Adrenal gland (tissue), 19 donors: ENCODE measurements at regions of chr2 and their contacts with region 1.

Region 1: DNA sequence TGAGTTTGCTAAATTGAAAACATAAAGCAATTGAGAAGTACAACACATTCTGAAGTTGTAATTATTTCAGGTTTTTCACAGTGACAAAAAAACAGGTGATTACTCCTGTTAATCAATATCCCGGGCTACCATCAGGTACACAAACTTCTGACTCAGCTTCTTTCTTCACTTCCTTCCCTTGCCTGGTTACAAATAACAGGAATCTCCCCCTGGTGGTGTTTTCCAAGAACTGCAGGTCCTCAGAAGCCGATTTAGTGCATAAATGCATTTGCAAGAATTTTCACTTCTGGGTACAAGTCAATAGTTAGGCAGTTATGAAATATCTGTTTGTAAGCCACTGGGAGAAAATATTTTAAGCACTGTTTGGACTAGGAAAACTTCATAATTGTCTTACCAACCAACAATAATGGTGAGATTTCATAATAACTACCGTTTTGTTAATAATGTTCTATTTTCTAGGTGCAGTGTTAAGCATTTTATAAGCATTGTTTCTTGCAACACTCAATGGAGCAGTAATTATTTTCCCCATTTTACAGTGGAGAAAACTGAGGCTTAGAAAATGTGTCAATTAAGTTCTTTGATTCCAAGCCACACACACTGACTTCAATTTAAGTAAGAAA is 12.4 kb upstream of the GMCL1 start:
- DNase-seq: peak; percentile 70 to 94 (median 83)
- H3K4me3 ChIP-seq: no peak overlapping the region
- H3K27ac ChIP-seq: no peak overlapping the region
- H3K4me1 ChIP-seq: no peaks in the 10 kb centered on the region
- H3K27me3 ChIP-seq: no peaks in the 10 kb centered on the region
- CTCF ChIP-seq: peak; percentile 90 to 96 (median 96)
- POLR2A ChIP-seq: no peak

Region 2: DNA sequence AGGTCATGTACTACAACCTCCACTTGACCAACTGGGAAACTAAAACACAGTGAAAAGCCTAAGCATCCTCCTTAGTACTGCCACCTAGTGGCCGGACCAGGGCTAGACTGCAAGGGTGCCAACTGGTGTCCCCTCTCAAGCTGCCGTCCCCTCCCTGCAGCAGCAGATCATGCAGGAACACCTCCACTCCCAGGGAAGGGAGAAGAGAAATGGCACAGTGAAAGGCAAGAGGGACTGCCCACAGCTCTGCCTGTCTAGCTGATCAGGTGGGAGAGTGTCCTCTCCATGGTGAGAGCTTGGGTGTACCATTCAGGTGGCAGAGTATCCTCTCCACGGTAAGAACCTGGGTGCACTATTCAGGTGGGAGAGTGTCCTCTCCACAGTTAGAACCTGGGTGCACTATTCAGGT is 251.6 kb before region 1 on chr2:
- intact Hi-C with region 1: loop called in 1 of 2 experiments (anchors 10 kb)
- DNase-seq: peak; percentile 35 to 74 (median 44)
- H3K4me3 ChIP-seq: no peak overlapping the region
- H3K27ac ChIP-seq: no peak overlapping the region
- H3K4me1 ChIP-seq: peaks cover 0 to 20% of the 10 kb centered on the region in 2 donors
- H3K27me3 ChIP-seq: no peaks in the 10 kb centered on the region
- CTCF ChIP-seq: peak; percentile 29 to 63 (median 56)
- POLR2A ChIP-seq: no peak

Region 3: GRCh38 chr2:69724540-69725159 is 92.4 kb before region 1 on chr2:
- intact Hi-C with region 1: loop called (anchors 2 to 5 kb)
- DNase-seq: peak; percentile 74 to 96 (median 88)
- H3K4me3 ChIP-seq: peak overlapping the region in 1 of 4 donors; percentile 25
- H3K27ac ChIP-seq: no peak overlapping the region
- H3K4me1 ChIP-seq: peaks cover 0 to 4% of the 10 kb centered on the region in 2 donors
- H3K27me3 ChIP-seq: no peaks in the 10 kb centered on the region
- CTCF ChIP-seq: peak; percentile 92 to 97 (median 96)
- POLR2A ChIP-seq: no peak